ENCODE measurements at regions of chr3 and their contacts with region 1.

Region 1: GRCh38 chr3:108623504-108623903 is 34.0 kb downstream of the DZIP3 start:
- DNase-seq: no peak
- H3K4me3 ChIP-seq: no peak overlapping the region
- H3K27ac ChIP-seq: no peak overlapping the region
- H3K4me1 ChIP-seq: no peaks in the 10 kb centered on the region
- H3K27me3 ChIP-seq: no peaks in the 10 kb centered on the region
- CTCF ChIP-seq: no peak

Region 2: DNA sequence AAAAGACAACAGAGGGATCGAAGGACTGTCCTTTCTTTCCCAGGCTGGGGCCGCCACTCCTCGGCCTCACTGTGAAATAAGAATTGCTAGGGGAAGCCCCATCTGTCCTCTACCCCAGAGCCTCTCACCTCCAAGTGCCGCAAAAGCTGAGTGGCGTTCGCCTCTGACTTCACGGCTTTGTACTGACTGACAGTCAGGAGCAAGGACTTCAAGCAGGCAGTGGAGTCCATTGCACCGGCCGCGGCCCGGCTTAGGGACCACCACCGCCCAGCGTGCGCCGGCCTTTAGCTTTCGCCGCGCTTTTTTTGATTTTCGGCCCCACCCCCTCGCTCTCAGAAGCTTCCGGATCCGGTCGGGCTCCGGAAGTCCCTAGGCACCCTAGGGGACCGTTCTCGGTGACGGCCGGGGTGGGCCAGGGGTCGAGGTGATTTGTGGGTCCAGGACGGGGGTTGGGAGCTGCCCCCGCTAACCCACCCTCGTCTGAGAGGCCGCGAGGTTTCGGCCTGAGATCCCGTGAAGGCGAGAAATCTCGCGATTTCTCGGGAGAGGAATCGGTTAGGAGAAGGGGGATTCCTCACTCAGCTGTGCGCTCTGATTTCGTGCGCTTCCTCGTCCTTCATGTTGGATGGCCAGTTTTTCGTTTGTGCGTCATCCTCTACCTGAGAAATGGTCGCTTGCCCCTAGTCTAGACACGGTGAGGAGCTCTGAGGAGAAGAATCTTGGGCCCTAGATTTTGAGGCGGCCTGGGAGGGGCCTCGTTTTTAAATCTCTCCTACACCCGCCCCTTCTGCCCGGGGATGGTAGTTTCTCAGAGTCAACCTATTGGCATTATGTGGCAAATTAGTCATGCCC is 34.1 kb before region 1 on chr3 and contains the starts of genes CIP2A and DZIP3:
- CTCF ChIA-PET with region 1: interaction called, 13 read pairs
- dilution Hi-C with region 1: no loop called
- in situ Hi-C with region 1: no loop called
- intact Hi-C with region 1: no loop called
- DNase-seq: peak; percentile 94
- H3K4me3 ChIP-seq: peak within 1 kb of the TSS; percentile 81 to 96 (median 83)
- H3K27ac ChIP-seq: peak within 1 kb of the TSS; percentile 96
- H3K4me1 ChIP-seq: peaks cover 4% of the 10 kb centered on the region
- H3K27me3 ChIP-seq: no peaks in the 10 kb centered on the region
- CTCF ChIP-seq: no peak
- total RNA-seq, gene CIP2A: 6.8 to 24.0 TPM
- total RNA-seq, gene DZIP3: 6.2 to 7.3 TPM

Region 3: DNA sequence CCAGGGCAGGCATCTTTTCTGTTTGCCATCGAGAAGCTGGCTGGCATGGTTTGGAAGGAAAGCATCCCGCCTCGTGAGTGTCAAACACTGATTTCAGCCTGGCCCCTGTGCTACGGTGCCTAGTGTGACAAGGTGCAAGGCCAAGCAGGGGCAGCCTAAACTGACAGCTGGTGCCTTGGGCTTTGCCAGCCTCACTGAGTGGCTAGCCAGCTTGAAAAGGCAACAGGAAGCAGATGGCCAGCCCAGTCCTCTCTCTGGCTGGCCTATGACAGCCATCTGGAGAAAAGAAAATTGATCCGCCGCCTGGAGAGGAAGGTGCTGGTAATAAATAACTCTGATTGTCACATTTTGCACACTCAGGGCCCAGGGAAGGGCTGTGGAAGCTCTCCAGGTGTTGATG is 565.2 kb after region 1 on chr3:
- CTCF ChIA-PET with region 1: no interaction called
- dilution Hi-C with region 1: no loop called
- in situ Hi-C with region 1: no loop called
- intact Hi-C with region 1: no loop called
- DNase-seq: no peak
- H3K4me3 ChIP-seq: no peak overlapping the region
- H3K27ac ChIP-seq: no peak overlapping the region
- H3K4me1 ChIP-seq: no peaks in the 10 kb centered on the region
- H3K27me3 ChIP-seq: no peaks in the 10 kb centered on the region
- CTCF ChIP-seq: no peak